MCF 10A (cell line): ENCODE measurements at regions of chr3 and their contacts with region 1.

Region 1: GRCh38 chr3:195442573-195443390 is at the start of gene ACAP2:
- DNase-seq: peak; percentile 99
- H3K4me3 Mint-ChIP-seq: peak within 1 kb of the TSS; percentile 96
- H3K27ac Mint-ChIP-seq: peak within 1 kb of the TSS; percentile 94
- H3K4me1 Mint-ChIP-seq: peaks cover 19% of the 10 kb centered on the region
- H3K27me3 Mint-ChIP-seq: no peaks in the 10 kb centered on the region
- CTCF ChIP-seq: no peak
- total RNA-seq, gene ACAP2: 53.2 and 64.3 TPM in 2 replicates

Region 2: GRCh38 chr3:195286115-195286872 is 156.5 kb before region 1 on chr3:
- CTCF ChIA-PET with region 1: interaction called, 3 read pairs
- POLR2A ChIA-PET with region 1: no interaction called
- intact Hi-C with region 1: loop called (anchors 5 kb)
- DNase-seq: peak; percentile 55
- H3K4me3 Mint-ChIP-seq: no peak overlapping the region
- H3K27ac Mint-ChIP-seq: no peak overlapping the region
- H3K4me1 Mint-ChIP-seq: peaks cover 10% of the 10 kb centered on the region
- H3K27me3 Mint-ChIP-seq: no peaks in the 10 kb centered on the region
- CTCF ChIP-seq: no peak

Region 3: DNA sequence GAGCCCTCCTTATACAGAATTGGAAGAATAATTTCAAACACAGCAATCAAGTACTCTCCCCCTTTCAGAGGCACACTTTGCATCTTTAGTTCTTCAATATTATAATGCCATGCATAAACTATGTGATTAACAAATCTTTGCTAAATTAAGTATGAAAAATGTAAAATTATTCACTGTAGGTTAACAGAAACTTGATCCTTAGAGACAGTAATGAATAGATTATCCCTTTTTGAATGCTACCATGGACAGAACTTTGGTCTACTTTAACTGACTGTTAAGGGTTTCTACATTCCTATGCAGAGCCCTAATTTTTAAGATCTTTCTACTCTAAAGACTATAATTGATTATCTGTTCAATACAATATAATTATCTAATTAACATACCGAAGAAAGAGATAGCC is 146.1 kb before region 1 on chr3:
- CTCF ChIA-PET with region 1: no interaction called
- POLR2A ChIA-PET with region 1: no interaction called
- intact Hi-C with region 1: no loop called
- DNase-seq: no peak
- H3K4me3 Mint-ChIP-seq: no peak overlapping the region
- H3K27ac Mint-ChIP-seq: no peak overlapping the region
- H3K4me1 Mint-ChIP-seq: no peaks in the 10 kb centered on the region
- H3K27me3 Mint-ChIP-seq: no peaks in the 10 kb centered on the region
- CTCF ChIP-seq: no peak

Region 4: GRCh38 chr3:195366200-195366925 is 76.4 kb before region 1 on chr3:
- CTCF ChIA-PET with region 1: no interaction called
- POLR2A ChIA-PET with region 1: interaction called, 10 read pairs
- intact Hi-C with region 1: loop called (anchors 5 kb)
- DNase-seq: peak; percentile 36
- H3K4me3 Mint-ChIP-seq: no peak overlapping the region
- H3K27ac Mint-ChIP-seq: no peak overlapping the region
- H3K4me1 Mint-ChIP-seq: peaks cover 9% of the 10 kb centered on the region
- H3K27me3 Mint-ChIP-seq: no peaks in the 10 kb centered on the region
- CTCF ChIP-seq: no peak

Region 5: DNA sequence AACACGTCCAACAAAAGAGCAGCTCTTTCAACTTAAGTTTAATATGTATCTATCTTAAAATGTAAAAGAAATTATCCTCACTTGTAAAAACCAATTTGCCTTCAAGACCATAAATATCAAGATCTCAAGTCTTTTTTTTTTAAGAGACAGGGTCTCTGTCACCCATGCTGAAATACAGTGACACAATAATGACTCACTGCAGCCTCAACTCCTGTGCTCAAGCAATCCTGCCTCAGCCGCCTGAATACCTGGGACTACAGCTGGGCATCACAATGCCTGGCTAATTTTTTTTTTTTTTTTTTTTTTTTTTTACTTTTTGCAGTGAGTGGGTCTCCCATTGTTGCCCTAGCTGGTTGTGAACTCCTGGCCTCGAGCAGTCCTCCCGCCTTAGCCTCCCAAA is 26.0 kb before region 1 on chr3:
- CTCF ChIA-PET with region 1: no interaction called
- POLR2A ChIA-PET with region 1: interaction called, 19 read pairs
- intact Hi-C with region 1: no loop called
- DNase-seq: peak; percentile 53
- H3K4me3 Mint-ChIP-seq: no peak overlapping the region
- H3K27ac Mint-ChIP-seq: no peak overlapping the region
- H3K4me1 Mint-ChIP-seq: peaks cover 32% of the 10 kb centered on the region
- H3K27me3 Mint-ChIP-seq: no peaks in the 10 kb centered on the region
- CTCF ChIP-seq: no peak

Region 6: DNA sequence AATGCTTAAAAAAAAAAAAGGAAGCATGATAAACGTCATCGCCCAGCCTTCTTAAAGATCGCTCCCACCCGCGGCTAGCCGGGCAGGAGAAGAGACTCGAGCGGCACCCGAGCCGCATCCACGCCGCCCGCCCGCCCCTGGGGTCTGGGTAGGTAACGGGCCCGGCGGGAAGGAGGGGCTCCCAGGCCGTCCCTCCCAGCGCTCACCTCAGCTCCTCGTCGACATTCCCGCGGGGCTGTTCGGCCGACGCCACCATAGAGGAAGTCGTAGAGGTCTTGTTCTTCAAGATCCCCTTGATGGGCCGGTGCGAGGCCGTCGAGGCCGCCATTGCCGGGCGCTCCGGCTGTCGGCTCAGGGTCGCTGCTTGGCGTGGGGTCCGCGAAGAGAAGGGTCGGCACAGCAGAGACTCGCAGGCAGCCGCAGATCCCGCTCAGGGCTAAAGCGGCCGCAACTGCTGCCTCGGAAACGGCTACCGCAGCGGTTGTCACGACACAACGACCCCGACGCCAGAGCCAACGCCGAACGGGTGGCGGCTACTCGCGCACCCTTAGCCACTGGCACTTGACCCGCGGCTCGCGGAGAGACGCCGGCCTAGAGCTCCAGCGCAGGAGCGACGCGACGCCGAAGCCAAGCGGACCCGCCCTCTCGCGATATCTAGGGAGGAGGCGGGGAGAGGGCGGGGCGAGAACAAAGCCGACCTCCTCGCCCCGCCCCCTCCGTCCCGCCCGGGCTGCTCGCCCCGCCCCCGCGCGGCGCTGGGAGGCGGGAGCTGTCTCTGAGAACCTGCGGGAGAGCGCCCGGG is 100.1 kb after region 1 on chr3 and contains the start of gene PPP1R2:
- CTCF ChIA-PET with region 1: no interaction called
- POLR2A ChIA-PET with region 1: interaction called, 37 read pairs
- intact Hi-C with region 1: no loop called
- DNase-seq: peak; percentile 94
- H3K4me3 Mint-ChIP-seq: peak within 1 kb of the TSS; percentile 76
- H3K27ac Mint-ChIP-seq: peak within 1 kb of the TSS; percentile 92
- H3K4me1 Mint-ChIP-seq: peaks cover 31% of the 10 kb centered on the region
- H3K27me3 Mint-ChIP-seq: no peaks in the 10 kb centered on the region
- CTCF ChIP-seq: no peak
- total RNA-seq, gene PPP1R2: 53.0 and 68.6 TPM in 2 replicates

Region 7: GRCh38 chr3:195760345-195761122 is 317.8 kb after region 1 on chr3:
- CTCF ChIA-PET with region 1: no interaction called
- POLR2A ChIA-PET with region 1: no interaction called
- intact Hi-C with region 1: no loop called
- DNase-seq: no peak
- H3K4me3 Mint-ChIP-seq: no peak overlapping the region
- H3K27ac Mint-ChIP-seq: no peak overlapping the region
- H3K4me1 Mint-ChIP-seq: peaks cover 17% of the 10 kb centered on the region
- H3K27me3 Mint-ChIP-seq: peaks cover 59% of the 10 kb centered on the region
- CTCF ChIP-seq: no peak